SK-N-SH (cell line): ENCODE measurements at regions of chr19 and their contacts with region 1.

Region 1: GRCh38 chr19:11421607-11422098 is 2.5 kb upstream of the RGL3 start:
- DNase-seq: peak; percentile 77
- H3K4me3 ChIP-seq: no peak overlapping the region
- H3K27ac ChIP-seq: no peak overlapping the region
- H3K4me1 ChIP-seq: no peaks in the 10 kb centered on the region; a peak in 1 of 4 replicates
- H3K27me3 ChIP-seq: no peaks in the 10 kb centered on the region
- CTCF ChIP-seq: no peak
- EP300 ChIP-seq: no peak
- RAD21 ChIP-seq: no peak

Region 2: GRCh38 chr19:11435058-11435832 is 13.6 kb after region 1 on chr19 and contains the starts of genes ODAD3 and PRKCSH:
- CTCF ChIA-PET with region 1: interaction called, 33 read pairs
- POLR2A ChIA-PET with region 1: interaction called, 7 read pairs
- DNase-seq: peak; percentile 96
- H3K4me3 ChIP-seq: peak within 1 kb of the TSS; percentile 69 to 83
- H3K27ac ChIP-seq: peak within 1 kb of the TSS; percentile 73
- H3K4me1 ChIP-seq: peaks cover 5 to 12% of the 10 kb centered on the region in 2 experiments; a peak in 1 of 4 replicates
- H3K27me3 ChIP-seq: no peaks in the 10 kb centered on the region
- CTCF ChIP-seq: peak; percentile 77
- EP300 ChIP-seq: no peak
- RAD21 ChIP-seq: peak; percentile 38; the same call in 1 of the 2 replicates
- polyA plus RNA-seq, gene ODAD3: 3.2 and 4.2 TPM in 2 replicates
- polyA plus RNA-seq, gene PRKCSH: 198 and 502 TPM in 2 replicates